CD4-positive, alpha-beta T cell (primary cell): ENCODE measurements at regions of chr1 and their contacts with region 1.

Region 1: DNA sequence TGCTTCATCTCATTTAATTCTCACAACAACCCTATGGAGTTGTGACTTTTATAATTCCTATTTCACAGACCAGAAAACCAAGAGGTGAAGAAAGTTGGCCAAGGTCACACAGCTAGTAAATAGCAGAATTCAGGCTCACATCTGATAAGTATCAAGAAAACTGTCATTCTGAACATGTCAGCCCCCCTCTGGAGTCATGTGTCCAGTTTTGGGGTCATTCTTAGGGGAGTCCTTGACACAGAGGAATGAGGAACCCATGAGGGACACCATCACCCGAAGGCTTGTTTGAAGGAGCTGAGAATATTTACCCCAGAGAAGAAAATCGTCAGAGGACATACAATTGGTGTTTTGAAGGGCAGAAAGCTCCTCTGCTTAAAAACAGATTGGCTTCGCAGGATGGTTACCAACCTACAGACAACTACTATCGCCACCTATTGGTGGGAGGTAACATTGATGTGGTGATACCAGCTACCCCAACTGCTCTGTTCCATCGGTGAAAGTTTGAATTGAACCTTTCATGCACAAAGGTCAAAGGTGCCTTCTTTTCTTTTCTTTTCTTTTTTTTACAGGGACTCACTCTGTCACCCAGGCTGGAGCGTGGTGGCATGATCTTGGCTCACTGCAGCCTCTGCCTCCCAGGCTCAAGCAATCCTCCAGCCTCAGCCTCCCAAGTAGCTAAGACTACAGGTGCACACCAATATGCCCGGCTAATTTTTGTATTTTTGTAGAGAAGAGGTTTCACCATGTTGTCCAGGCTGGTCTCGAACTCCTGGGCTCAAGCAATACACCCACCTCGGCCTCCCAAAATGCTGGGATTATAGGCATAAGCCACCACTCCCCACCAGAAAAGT is 31.3 kb downstream of the NCMAP start:
- DNase-seq: peak in 13 of 14 experiments; percentile 4 to 87 (median 48)
- ATAC-seq: peak; percentile 100
- H3K4me3 ChIP-seq: no peak overlapping the region
- H3K4me3 Mint-ChIP-seq: no peak overlapping the region
- H3K27ac ChIP-seq: no peak overlapping the region
- H3K27ac Mint-ChIP-seq: peak overlapping the region; percentile 66
- H3K4me1 ChIP-seq: peaks cover 3% of the 10 kb centered on the region
- H3K4me1 Mint-ChIP-seq: peaks cover 9% of the 10 kb centered on the region
- H3K27me3 ChIP-seq: no peaks in the 10 kb centered on the region
- H3K27me3 Mint-ChIP-seq: no peaks in the 10 kb centered on the region
- CTCF ChIP-seq: peak; percentile 86

Region 2: GRCh38 chr1:24357038-24357437 is 230.2 kb before region 1 on chr1:
- CTCF ChIA-PET with region 1: no interaction called
- POLR2A ChIA-PET with region 1: no interaction called
- intact Hi-C with region 1: no loop called
- DNase-seq: no peak
- ATAC-seq: no peak
- H3K4me3 ChIP-seq: no peak overlapping the region
- H3K4me3 Mint-ChIP-seq: no peak overlapping the region
- H3K27ac ChIP-seq: no peak overlapping the region
- H3K27ac Mint-ChIP-seq: no peak overlapping the region
- H3K4me1 ChIP-seq: peaks cover 3% of the 10 kb centered on the region
- H3K4me1 Mint-ChIP-seq: peaks cover 3% of the 10 kb centered on the region
- H3K27me3 ChIP-seq: no peaks in the 10 kb centered on the region
- H3K27me3 Mint-ChIP-seq: no peaks in the 10 kb centered on the region
- CTCF ChIP-seq: no peak

Region 3: GRCh38 chr1:24391882-24392603 is 195.2 kb before region 1 on chr1:
- CTCF ChIA-PET with region 1: interaction called, 27 read pairs
- POLR2A ChIA-PET with region 1: interaction called, 10 read pairs
- intact Hi-C with region 1: loop called (anchors 1 kb)
- DNase-seq: peak; percentile 44 to 84 (median 55)
- ATAC-seq: peak; percentile 79
- H3K4me3 ChIP-seq: peak overlapping the region; percentile 32
- H3K4me3 Mint-ChIP-seq: peak overlapping the region; percentile 52
- H3K27ac ChIP-seq: peak overlapping the region; percentile 63 to 78
- H3K27ac Mint-ChIP-seq: peak overlapping the region; percentile 85
- H3K4me1 ChIP-seq: peaks cover 29% of the 10 kb centered on the region
- H3K4me1 Mint-ChIP-seq: peaks cover 42% of the 10 kb centered on the region
- H3K27me3 ChIP-seq: no peaks in the 10 kb centered on the region
- H3K27me3 Mint-ChIP-seq: no peaks in the 10 kb centered on the region
- CTCF ChIP-seq: peak; percentile 75

Region 4: GRCh38 chr1:24415334-24415909 is 171.8 kb before region 1 on chr1 and contains the start of gene NIPAL3:
- CTCF ChIA-PET with region 1: interaction called, 45 read pairs
- POLR2A ChIA-PET with region 1: interaction called, 35 read pairs
- intact Hi-C with region 1: loop called (anchors 1 to 5 kb)
- DNase-seq: peak; percentile 92 to 99 (median 96)
- ATAC-seq: peak; percentile 94
- H3K4me3 ChIP-seq: peak within 1 kb of the TSS; percentile 82
- H3K4me3 Mint-ChIP-seq: peak within 1 kb of the TSS; percentile 97
- H3K27ac ChIP-seq: peak within 1 kb of the TSS; percentile 44 to 50
- H3K27ac Mint-ChIP-seq: peak within 1 kb of the TSS; percentile 91
- H3K4me1 ChIP-seq: peaks cover 61% of the 10 kb centered on the region
- H3K4me1 Mint-ChIP-seq: peaks cover 79% of the 10 kb centered on the region
- H3K27me3 ChIP-seq: no peaks in the 10 kb centered on the region
- H3K27me3 Mint-ChIP-seq: no peaks in the 10 kb centered on the region
- CTCF ChIP-seq: peak; percentile 87
- total RNA-seq, gene NIPAL3: 26.3 to 29.8 TPM

Region 5: DNA sequence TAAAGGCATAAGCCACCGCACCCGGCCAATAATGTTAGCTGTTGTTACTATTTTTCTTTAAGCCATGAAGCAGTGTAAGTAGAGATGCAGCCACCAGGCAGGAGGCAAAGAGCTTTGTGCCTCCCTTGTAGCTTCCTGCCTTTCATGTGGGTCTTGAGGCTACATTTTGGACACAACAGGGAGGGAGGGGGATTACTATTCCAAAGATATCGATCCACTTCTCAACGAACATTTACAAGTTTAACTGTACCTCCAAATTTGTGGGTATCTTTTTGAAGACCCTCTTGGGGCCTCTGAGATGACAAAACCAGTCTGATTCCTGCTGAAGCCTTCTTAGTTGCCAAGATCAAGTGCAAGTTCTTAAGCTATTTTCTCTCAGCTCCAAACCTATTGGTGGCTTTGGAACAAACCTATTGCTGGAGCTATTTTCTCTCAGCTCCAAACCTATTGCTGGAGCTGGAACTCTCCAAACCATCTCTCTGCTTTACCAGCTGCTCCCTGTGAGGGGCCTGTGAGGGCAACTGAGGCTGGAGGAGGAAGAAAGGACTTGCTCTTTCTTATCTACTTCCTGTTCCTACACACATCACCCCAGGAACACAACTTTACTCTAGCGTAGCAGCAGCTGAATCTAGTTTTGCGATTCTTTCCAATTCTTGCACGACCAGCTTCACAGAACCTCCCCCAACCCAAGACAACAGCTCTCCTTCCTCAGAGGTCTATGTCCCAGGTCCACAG is 100.7 kb before region 1 on chr1:
- CTCF ChIA-PET with region 1: interaction called, 22 read pairs
- POLR2A ChIA-PET with region 1: interaction called, 8 read pairs
- intact Hi-C with region 1: no loop called
- DNase-seq: peak in 12 of 14 experiments; percentile 24 to 84 (median 38)
- ATAC-seq: peak; percentile 46
- H3K4me3 ChIP-seq: peak overlapping the region; percentile 12
- H3K4me3 Mint-ChIP-seq: peak overlapping the region; percentile 77
- H3K27ac ChIP-seq: peak overlapping the region; percentile 43 to 68
- H3K27ac Mint-ChIP-seq: peak overlapping the region; percentile 98
- H3K4me1 ChIP-seq: peaks cover 78% of the 10 kb centered on the region
- H3K4me1 Mint-ChIP-seq: peaks cover 77% of the 10 kb centered on the region
- H3K27me3 ChIP-seq: no peaks in the 10 kb centered on the region
- H3K27me3 Mint-ChIP-seq: no peaks in the 10 kb centered on the region
- CTCF ChIP-seq: peak; percentile 7

Region 6: DNA sequence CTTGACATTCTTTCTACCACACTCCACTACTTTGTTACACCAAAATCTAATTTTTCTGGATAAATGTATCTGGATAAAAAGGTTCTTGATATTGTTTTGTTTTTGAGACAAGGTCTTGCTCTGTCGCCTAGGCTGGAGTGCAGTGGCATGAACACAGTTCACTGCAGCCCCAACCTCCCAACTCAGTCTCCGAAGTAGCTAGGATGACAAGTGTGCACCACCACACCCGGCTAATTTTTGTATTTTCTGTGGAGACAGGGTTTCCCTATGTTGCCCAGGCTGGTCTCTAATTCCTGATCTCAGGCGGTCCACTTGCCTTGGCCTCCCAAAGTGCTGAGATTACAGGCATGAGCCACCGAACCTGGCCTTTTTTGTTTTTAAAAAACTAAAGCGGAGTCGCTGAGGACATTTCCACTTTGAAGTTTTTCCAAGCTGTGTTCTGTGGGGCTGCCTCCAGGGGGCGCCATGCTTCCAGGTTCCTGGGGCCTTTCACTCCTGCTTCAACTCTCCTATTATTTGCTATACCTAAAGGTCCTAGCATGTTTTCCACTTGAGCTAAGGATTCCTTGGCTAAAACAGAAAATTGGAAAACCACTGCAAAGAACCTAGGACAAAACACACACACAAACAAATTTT is 45.4 kb before region 1 on chr1:
- CTCF ChIA-PET with region 1: interaction called, 42 read pairs
- POLR2A ChIA-PET with region 1: interaction called, 5 read pairs
- intact Hi-C with region 1: loop called (anchors 1 to 5 kb)
- DNase-seq: peak in 5 of 14 experiments; percentile 19 to 59 (median 45)
- ATAC-seq: no peak
- H3K4me3 ChIP-seq: no peak overlapping the region
- H3K4me3 Mint-ChIP-seq: peak overlapping the region; percentile 15
- H3K27ac ChIP-seq: no peak overlapping the region
- H3K27ac Mint-ChIP-seq: peak overlapping the region; percentile 87
- H3K4me1 ChIP-seq: peaks cover 22% of the 10 kb centered on the region
- H3K4me1 Mint-ChIP-seq: peaks cover 74% of the 10 kb centered on the region
- H3K27me3 ChIP-seq: no peaks in the 10 kb centered on the region
- H3K27me3 Mint-ChIP-seq: no peaks in the 10 kb centered on the region
- CTCF ChIP-seq: peak; percentile 60

Region 7: GRCh38 chr1:24635195-24635843 is 48.1 kb after region 1 on chr1:
- CTCF ChIA-PET with region 1: interaction called, 9 read pairs
- POLR2A ChIA-PET with region 1: no interaction called
- intact Hi-C with region 1: loop called (anchors 5 to 10 kb)
- DNase-seq: peak in 3 of 14 experiments; percentile 69 to 75 (median 74)
- ATAC-seq: peak; percentile 89
- H3K4me3 ChIP-seq: no peak overlapping the region
- H3K4me3 Mint-ChIP-seq: no peak overlapping the region
- H3K27ac ChIP-seq: no peak overlapping the region
- H3K27ac Mint-ChIP-seq: no peak overlapping the region
- H3K4me1 ChIP-seq: no peaks in the 10 kb centered on the region
- H3K4me1 Mint-ChIP-seq: peaks cover 9% of the 10 kb centered on the region
- H3K27me3 ChIP-seq: peaks cover 0 to under 1% of the 10 kb centered on the region in 2 experiments
- H3K27me3 Mint-ChIP-seq: peaks cover 11% of the 10 kb centered on the region
- CTCF ChIP-seq: peak; percentile 76